Activated naive CD4-positive, alpha-beta T cell treated with anti-CD3 and anti-CD28 coated beads for 36 hours (primary cell): ENCODE measurements at regions of chr3 and their contacts with region 1.

Region 1: DNA sequence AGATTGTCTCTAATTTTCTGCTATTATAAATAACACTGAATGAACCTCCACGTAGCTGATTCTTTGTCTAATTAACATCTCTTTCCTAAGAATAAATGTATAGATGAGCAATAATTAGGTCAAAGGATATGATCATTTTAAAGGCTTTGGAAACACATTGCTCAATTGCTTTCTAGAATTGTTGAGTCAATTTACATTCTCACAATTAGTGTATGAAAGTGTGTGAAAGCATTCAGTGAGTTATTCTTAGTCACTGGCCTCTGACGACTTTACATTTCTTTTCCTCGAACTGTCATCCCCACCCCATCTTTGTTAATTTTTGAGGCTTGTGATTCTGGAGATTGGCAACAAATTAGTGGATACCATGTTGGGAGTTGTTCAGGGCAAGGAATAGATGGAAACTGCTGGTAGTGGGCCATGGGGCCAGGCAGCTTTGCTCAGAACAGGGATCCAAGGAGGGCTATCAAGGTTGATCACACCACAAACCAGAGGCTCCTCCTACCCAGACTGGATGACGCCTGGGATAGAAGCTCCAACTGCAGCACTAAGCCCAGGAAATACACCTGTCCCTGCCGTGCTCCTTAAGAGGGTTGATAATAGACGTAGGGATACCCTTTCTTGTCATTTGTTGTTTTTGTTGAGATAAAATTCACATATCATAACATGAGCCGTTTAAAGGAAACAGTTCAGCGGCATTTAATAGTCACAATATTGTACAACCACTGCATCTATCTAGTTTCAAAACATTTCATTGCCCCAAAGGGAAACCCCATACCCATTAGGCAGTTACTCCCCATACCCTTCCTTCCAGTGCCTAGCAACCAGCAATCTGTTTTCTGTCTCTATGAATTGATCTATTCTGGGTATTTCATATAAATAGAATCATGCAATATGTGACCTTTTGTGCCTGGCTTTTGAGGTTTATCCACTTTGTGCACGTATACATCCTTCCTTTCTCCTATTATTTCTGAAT is 27.9 kb downstream of the EIF1B start:
- DNase-seq: no peak
- H3K4me3 Mint-ChIP-seq: no peak overlapping the region
- H3K27ac Mint-ChIP-seq: no peak overlapping the region
- H3K4me1 Mint-ChIP-seq: peaks cover 11% of the 10 kb centered on the region
- H3K27me3 Mint-ChIP-seq: no peaks in the 10 kb centered on the region

Region 2: DNA sequence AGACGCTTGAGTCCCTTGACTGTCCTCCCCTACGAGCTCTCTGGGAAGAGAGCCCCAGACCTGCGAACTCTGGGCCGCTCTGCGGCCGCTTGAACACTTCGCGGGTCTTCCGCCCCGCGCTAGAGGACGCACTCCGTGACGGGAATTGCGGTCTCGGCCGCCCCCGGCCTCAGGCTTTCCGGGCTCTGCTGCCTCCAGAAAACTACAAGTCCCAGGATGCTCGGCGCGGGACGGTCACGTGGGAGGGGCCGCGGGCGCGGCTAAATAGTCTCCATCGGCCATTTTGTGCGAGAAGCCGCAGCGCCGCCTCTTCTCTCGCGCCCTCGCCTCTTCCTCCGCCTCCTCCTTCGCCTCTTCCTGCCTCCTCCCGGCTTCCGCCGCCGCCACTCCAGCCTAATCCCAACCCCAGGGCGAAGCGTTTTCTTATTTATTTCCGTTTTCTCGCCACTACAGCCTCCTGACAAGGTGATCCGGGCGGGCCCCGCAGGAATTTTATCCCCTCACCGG is 28.0 kb before region 1 on chr3 and contains the start of gene EIF1B:
- CTCF ChIA-PET with region 1: interaction called, 4 read pairs
- intact Hi-C with region 1: loop called (anchors 1 kb)
- DNase-seq: peak; percentile 99
- H3K4me3 Mint-ChIP-seq: peak within 1 kb of the TSS; percentile 99
- H3K27ac Mint-ChIP-seq: peak within 1 kb of the TSS; percentile 98
- H3K4me1 Mint-ChIP-seq: peaks cover 24% of the 10 kb centered on the region
- H3K27me3 Mint-ChIP-seq: no peaks in the 10 kb centered on the region
- total RNA-seq, gene EIF1B: 47.0 to 49.2 TPM

Region 3: DNA sequence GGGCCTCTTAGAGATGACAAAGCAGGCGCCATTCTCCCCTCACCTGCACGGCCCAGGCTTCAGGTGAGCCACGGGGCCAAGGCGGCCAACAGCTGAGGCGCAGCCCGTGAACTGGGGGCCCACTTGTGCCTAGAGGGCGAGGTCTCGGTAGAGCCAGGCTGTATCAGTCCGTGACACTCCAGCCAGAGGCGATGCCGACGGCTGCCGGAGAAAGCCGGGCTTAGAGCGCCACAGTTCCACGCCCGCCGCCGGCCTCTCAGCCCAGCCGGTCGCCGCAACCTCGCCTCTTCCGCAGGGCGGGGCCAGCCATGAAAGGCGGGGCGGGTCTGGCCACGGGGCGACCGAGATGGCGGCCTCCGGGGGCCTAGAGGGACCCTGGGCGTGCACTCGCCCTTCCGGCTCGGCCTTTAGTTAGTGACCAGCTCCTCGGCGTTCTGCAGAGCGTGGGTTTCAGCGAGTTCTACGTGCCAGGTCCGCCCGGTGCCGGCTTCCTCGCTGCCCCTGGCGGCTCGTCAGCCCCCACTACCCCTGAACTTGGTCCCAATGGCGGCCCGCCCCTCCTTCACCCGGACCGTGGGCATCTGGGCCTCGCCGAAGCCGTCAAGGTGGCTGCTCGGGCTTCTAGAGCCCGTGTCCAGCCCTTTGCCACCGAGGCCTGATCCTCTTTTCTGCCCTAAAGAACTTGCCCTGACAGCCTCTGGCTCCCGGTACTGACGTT is 187.3 kb after region 1 on chr3 and contains the start of gene ZNF621:
- CTCF ChIA-PET with region 1: no interaction called
- intact Hi-C with region 1: loop called (anchors 1 kb)
- DNase-seq: peak; percentile 82
- H3K4me3 Mint-ChIP-seq: peak within 1 kb of the TSS; percentile 92
- H3K27ac Mint-ChIP-seq: peak within 1 kb of the TSS; percentile 85
- H3K4me1 Mint-ChIP-seq: peaks cover 11% of the 10 kb centered on the region
- H3K27me3 Mint-ChIP-seq: no peaks in the 10 kb centered on the region
- total RNA-seq, gene ZNF621: 16.4 to 17.7 TPM

Region 4: DNA sequence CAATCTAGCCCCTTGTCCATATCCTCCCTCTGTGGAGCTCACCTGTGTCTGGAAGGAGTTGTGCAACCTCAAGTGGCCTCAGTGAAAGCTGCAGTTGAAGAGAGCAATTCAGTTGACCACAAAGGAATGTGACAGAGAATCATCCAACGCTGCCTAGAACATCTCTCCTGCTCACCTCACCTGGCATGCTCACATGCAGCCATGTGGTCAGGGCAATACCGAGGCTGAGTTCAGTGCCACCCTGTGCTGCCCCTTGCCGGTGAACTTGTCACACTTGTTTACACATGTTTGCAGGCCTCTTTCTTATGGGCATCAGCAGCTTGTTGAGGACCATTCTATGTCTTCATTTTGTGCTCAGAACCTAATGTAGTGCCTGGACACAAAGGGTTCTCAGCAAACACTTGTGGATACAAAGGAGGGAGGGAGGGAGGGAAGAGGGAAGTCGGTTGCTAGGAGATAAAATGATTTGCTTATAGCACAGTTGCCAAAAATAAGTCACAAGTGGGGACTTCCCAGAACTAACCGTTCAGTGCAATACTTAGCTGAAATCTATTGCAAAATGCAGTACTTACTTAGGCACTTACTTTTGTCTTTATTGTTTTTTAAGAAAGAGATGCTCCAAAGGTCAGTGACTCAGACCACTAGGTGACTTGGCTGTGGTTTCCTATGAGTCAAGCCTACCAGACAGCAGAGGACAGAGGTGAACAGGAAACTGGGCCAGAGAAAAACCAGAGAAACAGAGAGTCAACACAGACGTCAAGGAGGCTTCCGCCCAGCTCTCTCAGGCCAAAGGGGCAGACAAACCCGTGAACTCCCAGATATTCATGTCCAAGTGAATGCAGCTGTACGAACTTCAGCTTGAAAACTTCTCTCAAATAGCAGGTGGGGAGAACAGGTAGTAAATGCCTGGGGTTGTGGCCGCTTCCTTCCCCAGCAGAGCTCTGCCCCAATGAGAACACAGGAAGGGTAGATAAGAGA is 634.1 kb after region 1 on chr3:
- CTCF ChIA-PET with region 1: no interaction called
- intact Hi-C with region 1: loop called (anchors 10 kb)
- DNase-seq: peak; percentile 48
- H3K4me3 Mint-ChIP-seq: no peak overlapping the region
- H3K27ac Mint-ChIP-seq: peak overlapping the region; percentile 10
- H3K4me1 Mint-ChIP-seq: peaks cover 13% of the 10 kb centered on the region
- H3K27me3 Mint-ChIP-seq: peaks cover 26% of the 10 kb centered on the region

Region 5: DNA sequence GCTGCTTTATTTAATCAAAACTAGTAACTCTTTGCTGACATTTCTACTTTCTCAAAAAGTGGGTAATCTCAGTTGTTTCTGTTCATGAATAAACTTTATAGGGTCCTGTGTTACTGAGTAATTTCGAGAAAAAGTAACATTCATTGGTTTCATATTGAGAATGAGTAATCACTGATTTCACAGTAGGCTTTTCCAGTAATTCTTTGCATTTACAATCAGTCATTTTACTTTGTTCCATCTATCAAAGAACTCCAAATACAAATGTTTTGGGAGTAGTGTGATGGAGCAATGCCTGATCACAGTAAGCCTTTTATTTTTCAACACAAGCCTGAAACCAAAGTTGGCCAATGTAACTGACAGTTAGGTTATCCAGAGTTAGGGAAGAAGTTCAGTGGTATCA is 1270.9 kb after region 1 on chr3:
- CTCF ChIA-PET with region 1: no interaction called
- intact Hi-C with region 1: loop called (anchors 1 kb)
- DNase-seq: no peak
- H3K4me3 Mint-ChIP-seq: no peak overlapping the region
- H3K27ac Mint-ChIP-seq: peak overlapping the region; percentile 52
- H3K4me1 Mint-ChIP-seq: peaks cover 12% of the 10 kb centered on the region
- H3K27me3 Mint-ChIP-seq: no peaks in the 10 kb centered on the region

Region 6: GRCh38 chr3:41836360-41837134 is 1499.1 kb after region 1 on chr3:
- CTCF ChIA-PET with region 1: no interaction called
- intact Hi-C with region 1: loop called (anchors 1 kb)
- DNase-seq: peak; percentile 9
- H3K4me3 Mint-ChIP-seq: no peak overlapping the region
- H3K27ac Mint-ChIP-seq: no peak overlapping the region
- H3K4me1 Mint-ChIP-seq: peaks cover 16% of the 10 kb centered on the region
- H3K27me3 Mint-ChIP-seq: no peaks in the 10 kb centered on the region

Region 7: GRCh38 chr3:42090973-42091731 is 1753.7 kb after region 1 on chr3 and contains the start of gene TRAK1:
- CTCF ChIA-PET with region 1: no interaction called
- intact Hi-C with region 1: loop called (anchors 10 kb)
- DNase-seq: no peak
- H3K4me3 Mint-ChIP-seq: no peak within 1 kb of the TSS
- H3K27ac Mint-ChIP-seq: no peak within 1 kb of the TSS
- H3K4me1 Mint-ChIP-seq: peaks cover 51% of the 10 kb centered on the region
- H3K27me3 Mint-ChIP-seq: no peaks in the 10 kb centered on the region
- total RNA-seq, gene TRAK1: 18.3 to 19.1 TPM